SK-N-SH (cell line): ENCODE measurements at regions of chr9 and their contacts with region 1.

Region 1: GRCh38 chr9:77163884-77164283 is 13.4 kb upstream of the VPS13A start:
- DNase-seq: no peak
- H3K4me3 ChIP-seq: no peak overlapping the region
- H3K27ac ChIP-seq: no peak overlapping the region
- H3K4me1 ChIP-seq: no peaks in the 10 kb centered on the region; a peak in 1 of 4 replicates
- H3K27me3 ChIP-seq: no peaks in the 10 kb centered on the region
- CTCF ChIP-seq: no peak
- EP300 ChIP-seq: no peak
- RAD21 ChIP-seq: no peak

Region 2: DNA sequence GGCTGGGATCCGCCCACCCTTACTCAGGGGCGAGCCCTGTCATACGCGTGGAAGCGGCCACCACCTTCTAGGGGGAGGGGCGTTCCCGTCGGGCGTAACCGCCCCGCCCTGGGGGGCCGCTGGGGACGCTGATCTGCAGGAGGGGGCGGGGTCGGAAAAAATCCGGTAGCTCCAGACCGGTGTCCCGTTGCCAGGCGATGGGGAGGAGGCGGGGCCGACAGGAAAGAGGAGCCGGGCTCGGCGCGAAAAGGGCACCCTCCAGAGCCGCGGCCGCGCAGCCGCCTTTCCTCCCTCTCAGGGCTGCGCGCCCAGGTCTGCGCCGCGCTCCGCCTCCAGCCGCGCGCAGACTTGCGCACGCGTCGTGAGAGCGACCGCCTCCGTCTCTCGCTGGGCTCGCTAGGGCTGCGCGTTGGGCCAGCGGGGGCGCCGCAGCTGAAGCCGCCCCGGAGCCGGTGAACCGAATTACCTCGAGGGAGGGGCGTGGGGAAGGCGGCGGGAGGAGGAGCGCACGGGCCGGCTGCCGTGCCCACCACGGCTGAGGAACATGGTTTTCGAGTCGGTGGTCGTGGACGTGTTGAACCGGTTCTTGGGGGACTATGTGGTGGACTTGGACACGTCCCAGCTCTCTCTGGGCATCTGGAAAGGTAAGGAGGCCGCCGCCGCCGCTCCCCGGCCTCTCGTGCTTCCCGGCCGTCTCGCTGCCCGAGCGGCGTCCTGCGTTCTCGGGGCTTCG is 13.4 kb after region 1 on chr9 and contains the start of gene VPS13A:
- CTCF ChIA-PET with region 1: interaction called, 11 read pairs
- POLR2A ChIA-PET with region 1: no interaction called
- DNase-seq: peak; percentile 95
- H3K4me3 ChIP-seq: peak within 1 kb of the TSS; percentile 92 to 95
- H3K27ac ChIP-seq: peak within 1 kb of the TSS; percentile 53 to 86
- H3K4me1 ChIP-seq: peaks cover 6 to 16% of the 10 kb centered on the region in 2 experiments; a peak in 3 of 4 replicates
- H3K27me3 ChIP-seq: no peaks in the 10 kb centered on the region
- CTCF ChIP-seq: peak; percentile 37
- EP300 ChIP-seq: no peak
- RAD21 ChIP-seq: no peak
- polyA plus RNA-seq, gene VPS13A: 6.0 and 9.7 TPM in 2 replicates

Region 3: GRCh38 chr9:77215874-77216273 is 52.0 kb after region 1 on chr9:
- CTCF ChIA-PET with region 1: interaction called, 25 read pairs
- POLR2A ChIA-PET with region 1: no interaction called
- DNase-seq: no peak
- H3K4me3 ChIP-seq: no peak overlapping the region
- H3K27ac ChIP-seq: no peak overlapping the region
- H3K4me1 ChIP-seq: peaks cover 0 to 4% of the 10 kb centered on the region in 2 experiments; a peak in 3 of 4 replicates
- H3K27me3 ChIP-seq: no peaks in the 10 kb centered on the region
- CTCF ChIP-seq: peak; percentile 51
- EP300 ChIP-seq: no peak
- RAD21 ChIP-seq: peak; percentile 66